Heart right ventricle (tissue), 16 donors: ENCODE measurements at regions of chr22 and their contacts with region 1.

Region 1: DNA sequence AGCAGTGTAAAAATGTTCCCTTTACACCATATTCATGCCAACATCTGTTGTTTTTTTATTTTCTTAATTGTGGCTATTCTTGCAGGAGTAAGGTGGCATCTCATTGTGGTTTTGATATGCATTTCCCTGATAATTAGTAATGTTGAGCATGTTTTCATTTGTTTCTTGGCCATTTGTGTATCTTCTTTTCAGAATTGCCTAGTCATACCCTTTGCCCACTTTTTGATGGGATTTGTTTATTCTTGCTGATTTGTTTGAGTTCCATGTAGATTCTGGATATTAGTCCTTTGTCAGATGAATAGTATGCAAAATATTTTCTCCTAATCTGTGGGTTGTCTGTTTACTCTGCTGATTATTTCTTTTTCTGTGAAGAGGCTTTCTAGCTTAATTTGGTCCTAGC is 98.9 kb upstream of the SERPIND1 start:
- DNase-seq: no peak
- ATAC-seq: no peak
- H3K4me3 ChIP-seq: no peak overlapping the region
- H3K27ac ChIP-seq: no peak overlapping the region
- H3K4me1 ChIP-seq: no peaks in the 10 kb centered on the region
- H3K27me3 ChIP-seq: peaks cover 0 to 71% (median 29%) of the 10 kb centered on the region in 7 donors
- CTCF ChIP-seq: no peak

Region 2: GRCh38 chr22:20591660-20592310 is 83.2 kb before region 1 on chr22:
- intact Hi-C with region 1: loop called in 1 of 10 experiments (anchors 10 kb)
- DNase-seq: no peak
- ATAC-seq: no peak
- H3K4me3 ChIP-seq: no peak overlapping the region
- H3K27ac ChIP-seq: no peak overlapping the region
- H3K4me1 ChIP-seq: no peaks in the 10 kb centered on the region
- H3K27me3 ChIP-seq: no peaks in the 10 kb centered on the region
- CTCF ChIP-seq: no peak

Region 3: GRCh38 chr22:20750461-20751184 is 75.6 kb after region 1 on chr22:
- intact Hi-C with region 1: no loop called
- DNase-seq: peak; percentile 56 to 66
- ATAC-seq: peak; percentile 76 to 90 (median 82)
- H3K4me3 ChIP-seq: no peak overlapping the region
- H3K27ac ChIP-seq: no peak overlapping the region
- H3K4me1 ChIP-seq: peaks cover 7 to 27% (median 12%) of the 10 kb centered on the region in 9 donors
- H3K27me3 ChIP-seq: no peaks in the 10 kb centered on the region
- CTCF ChIP-seq: no peak